Mammary epithelial cell (primary cell): ENCODE measurements at regions of chr1 and their contacts with region 1.

Region 1: DNA sequence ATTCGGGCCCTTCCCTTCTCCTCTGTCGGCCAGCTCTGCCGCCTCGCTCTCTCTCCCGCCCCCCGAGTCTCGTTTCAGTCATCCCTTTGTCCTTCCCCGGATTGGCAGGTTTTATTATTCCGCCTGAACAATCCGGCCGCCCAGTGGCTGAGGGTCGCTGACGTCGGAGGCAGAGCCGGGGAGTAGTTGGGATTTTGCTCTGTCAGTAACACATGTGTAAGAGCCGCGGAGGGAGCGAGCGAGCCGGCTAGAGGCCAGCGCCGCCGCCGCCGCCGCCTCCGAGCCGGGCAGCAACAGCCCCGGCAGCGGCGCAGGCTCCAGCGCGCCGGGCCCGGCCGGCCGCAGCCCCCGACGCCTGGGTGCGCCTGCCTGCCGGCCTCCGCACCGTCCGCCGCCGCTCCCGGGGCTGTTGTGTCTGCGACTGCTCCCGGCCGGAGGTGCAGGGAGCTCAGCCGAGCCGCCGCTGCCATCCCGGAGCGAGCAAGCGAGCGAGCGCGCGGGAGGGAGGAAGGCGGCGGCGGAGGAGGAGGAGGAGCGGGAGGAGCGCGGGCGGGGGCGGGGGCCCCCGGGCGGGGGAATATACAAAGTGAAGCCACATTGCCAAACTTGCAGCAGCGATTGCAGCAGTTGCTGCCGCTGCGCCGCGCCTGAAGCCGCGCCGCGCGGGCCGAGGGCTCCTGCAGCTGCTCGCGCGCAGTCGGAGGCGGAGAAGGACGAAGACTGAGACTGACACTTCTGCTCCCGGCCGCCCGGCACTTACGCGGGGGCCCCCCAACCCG is at the start of gene LMO4:
- DNase-seq: peak; percentile 98
- H3K4me3 ChIP-seq: peak within 1 kb of the TSS; percentile 72 to 92 (median 82)
- H3K27ac ChIP-seq: peak within 1 kb of the TSS; percentile 83
- H3K4me1 ChIP-seq: peaks cover 16% of the 10 kb centered on the region
- H3K27me3 ChIP-seq: no peaks in the 10 kb centered on the region
- CTCF ChIP-seq: no peak
- total RNA-seq, gene LMO4: 40.2 to 44.7 TPM

Region 2: DNA sequence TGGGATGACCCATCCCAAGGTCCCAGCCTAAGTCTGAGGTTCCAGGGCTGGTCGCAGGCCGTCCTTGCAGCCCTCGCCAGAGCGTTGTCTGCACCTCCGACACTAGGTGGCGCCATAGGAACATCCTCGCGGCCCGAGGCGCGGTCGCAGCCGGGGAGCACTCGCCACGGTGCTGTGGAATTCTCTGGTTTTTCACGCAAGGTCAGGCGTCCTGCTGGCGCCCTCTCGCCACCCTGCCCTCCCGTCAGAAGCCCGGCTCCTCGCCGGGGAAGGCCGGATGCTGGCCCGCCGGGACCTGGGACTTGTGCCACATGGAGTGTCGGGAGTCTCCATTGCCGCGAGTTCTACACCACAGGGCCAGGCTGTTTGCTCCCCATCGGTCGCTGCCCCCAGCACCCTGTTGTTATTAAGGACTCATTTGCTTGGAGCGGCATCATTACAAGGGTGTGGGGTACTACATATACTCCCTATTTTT is 196.6 kb before region 1 on chr1:
- CTCF ChIA-PET with region 1: no interaction called
- dilution Hi-C with region 1: no loop called
- in situ Hi-C with region 1: no loop called
- intact Hi-C with region 1: loop called (anchors 1 kb)
- DNase-seq: peak; percentile 54
- H3K4me3 ChIP-seq: peak overlapping the region; percentile 4 to 63 (median 40)
- H3K27ac ChIP-seq: no peak overlapping the region
- H3K4me1 ChIP-seq: peaks cover 23% of the 10 kb centered on the region
- H3K27me3 ChIP-seq: no peaks in the 10 kb centered on the region
- CTCF ChIP-seq: peak; percentile 82 to 97

Region 3: DNA sequence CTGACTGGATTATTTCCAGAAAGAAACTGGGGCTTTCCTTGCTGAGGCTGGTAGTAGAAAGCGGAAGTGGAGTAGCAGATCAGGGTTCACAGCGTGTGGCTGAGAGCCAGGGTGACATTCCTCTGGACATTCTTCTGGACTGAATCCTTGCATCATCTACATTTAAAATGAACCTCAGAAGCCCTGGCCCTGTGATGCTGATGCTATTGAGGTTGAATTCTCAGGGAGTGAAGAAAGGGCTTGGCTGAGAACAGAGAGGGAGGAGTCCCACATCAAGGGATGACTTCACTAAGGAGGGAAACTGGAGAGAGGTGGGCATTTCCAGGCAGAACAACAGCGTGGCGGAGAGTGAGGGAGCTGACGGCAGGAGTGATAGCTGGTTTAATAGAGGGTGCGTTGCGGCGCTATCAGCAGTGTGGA is 102.1 kb before region 1 on chr1:
- CTCF ChIA-PET with region 1: no interaction called
- dilution Hi-C with region 1: no loop called
- in situ Hi-C with region 1: no loop called
- intact Hi-C with region 1: loop called (anchors 2 kb)
- DNase-seq: peak; percentile 99
- H3K4me3 ChIP-seq: no peak overlapping the region
- H3K27ac ChIP-seq: peak overlapping the region; percentile 77
- H3K4me1 ChIP-seq: peaks cover 27% of the 10 kb centered on the region
- H3K27me3 ChIP-seq: no peaks in the 10 kb centered on the region
- CTCF ChIP-seq: no peak

Region 4: GRCh38 chr1:87292684-87293493 is 35.6 kb before region 1 on chr1:
- CTCF ChIA-PET with region 1: interaction called, 10 read pairs
- dilution Hi-C with region 1: no loop called
- in situ Hi-C with region 1: no loop called
- intact Hi-C with region 1: no loop called
- DNase-seq: peak; percentile 21
- H3K4me3 ChIP-seq: no peak overlapping the region
- H3K27ac ChIP-seq: no peak overlapping the region
- H3K4me1 ChIP-seq: no peaks in the 10 kb centered on the region
- H3K27me3 ChIP-seq: peaks cover 2% of the 10 kb centered on the region
- CTCF ChIP-seq: peak; percentile 69 to 73

Region 5: DNA sequence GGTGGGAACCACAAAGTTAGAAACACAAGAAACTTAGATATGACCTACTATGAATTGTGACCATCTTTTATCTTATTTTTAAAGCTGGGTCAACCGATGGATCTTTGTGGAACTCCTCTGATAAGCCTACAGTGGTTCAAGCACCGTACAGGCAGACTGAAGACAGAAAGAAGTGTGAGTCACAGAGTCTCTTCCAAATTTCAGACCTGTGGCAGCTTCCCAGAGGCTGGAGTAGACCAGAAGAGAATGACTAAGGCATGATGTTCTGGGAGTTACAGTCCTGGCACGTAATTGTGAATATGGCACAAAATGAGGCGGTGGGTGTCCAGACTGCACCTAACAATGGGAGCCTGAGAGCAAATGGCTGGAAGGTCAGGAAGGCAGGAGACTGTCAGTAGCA is 70.2 kb after region 1 on chr1:
- CTCF ChIA-PET with region 1: no interaction called
- dilution Hi-C with region 1: no loop called
- in situ Hi-C with region 1: loop called in 1 of 2 experiments (anchors 5 kb)
- intact Hi-C with region 1: no loop called
- DNase-seq: peak; percentile 87
- H3K4me3 ChIP-seq: peak overlapping the region in 1 of 3 experiments; percentile 2
- H3K27ac ChIP-seq: peak overlapping the region; percentile 89
- H3K4me1 ChIP-seq: peaks cover 23% of the 10 kb centered on the region
- H3K27me3 ChIP-seq: no peaks in the 10 kb centered on the region
- CTCF ChIP-seq: no peak

Region 6: DNA sequence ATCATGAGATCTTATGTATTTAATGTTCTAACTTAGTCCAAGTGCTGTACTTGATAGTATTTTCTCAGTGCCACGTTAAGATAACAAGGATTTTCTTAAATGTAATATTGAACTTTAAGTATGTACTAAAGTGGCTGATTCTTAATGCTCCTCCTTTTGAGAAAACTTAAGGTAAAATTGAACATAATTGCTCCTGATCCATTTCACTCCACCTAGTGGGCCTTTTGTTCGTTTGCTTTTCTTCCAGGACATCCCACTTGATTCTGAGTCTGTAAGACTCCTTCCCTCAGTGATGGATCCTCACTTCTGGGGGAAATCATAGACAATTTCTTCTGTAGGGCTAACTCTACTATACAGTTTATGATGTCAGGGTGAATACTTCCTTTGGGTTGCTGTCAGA is 173.3 kb after region 1 on chr1:
- CTCF ChIA-PET with region 1: no interaction called
- dilution Hi-C with region 1: no loop called
- in situ Hi-C with region 1: no loop called
- intact Hi-C with region 1: loop called (anchors 5 kb)
- DNase-seq: peak; percentile 10
- H3K4me3 ChIP-seq: no peak overlapping the region
- H3K27ac ChIP-seq: no peak overlapping the region
- H3K4me1 ChIP-seq: no peaks in the 10 kb centered on the region
- H3K27me3 ChIP-seq: no peaks in the 10 kb centered on the region
- CTCF ChIP-seq: peak in 1 of 2 donors; percentile 16